ENCODE measurements at regions of chr12 and their contacts with region 1.

Region 1: DNA sequence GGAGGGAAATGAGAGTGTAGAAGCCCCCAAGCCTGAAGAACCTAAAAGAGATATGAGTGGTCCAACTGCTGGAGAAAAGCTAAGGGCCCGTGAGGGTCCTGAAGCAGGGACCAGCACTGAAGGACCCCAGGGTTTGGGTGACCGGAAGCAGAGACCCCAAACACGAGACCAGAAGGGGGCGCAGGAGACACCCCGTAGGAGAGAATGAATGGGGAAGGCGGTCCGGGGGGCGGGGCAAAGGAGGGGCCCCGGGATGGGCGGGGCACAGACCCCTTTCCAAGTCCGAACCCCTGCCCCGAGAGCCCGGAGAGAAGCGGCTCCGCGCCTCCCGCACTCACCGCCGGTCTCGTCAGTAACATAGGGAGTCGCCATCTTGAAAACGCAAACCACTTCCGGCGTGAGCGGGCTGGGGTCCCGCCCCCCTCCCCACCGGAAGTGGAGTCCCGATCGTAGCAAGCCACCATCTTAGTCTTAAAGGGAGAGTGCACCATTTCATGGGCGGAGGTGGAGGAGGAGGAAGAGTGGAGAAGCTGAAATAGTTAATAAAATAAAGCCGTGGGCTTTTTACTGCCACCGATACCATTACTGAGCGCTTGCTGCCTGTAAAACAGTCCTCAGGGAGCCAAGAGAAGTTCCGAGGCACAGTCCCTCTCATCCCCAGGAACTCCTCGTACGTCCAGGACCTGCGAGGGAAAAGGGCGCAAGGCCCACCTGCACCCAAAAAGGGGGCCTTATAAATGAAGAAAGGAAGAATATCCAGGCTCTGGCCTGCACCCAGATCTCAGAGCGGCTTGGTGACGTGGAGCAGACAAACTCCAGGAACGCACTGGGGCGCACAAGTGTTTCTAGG is 731 bp downstream of the PYM1 start:
- DNase-seq: peak; percentile 85
- H3K4me3 Mint-ChIP-seq: peak overlapping the region; percentile 90
- H3K27ac Mint-ChIP-seq: peak overlapping the region; percentile 96
- H3K4me1 Mint-ChIP-seq: peaks cover 52% of the 10 kb centered on the region
- H3K27me3 Mint-ChIP-seq: no peaks in the 10 kb centered on the region

Region 2: DNA sequence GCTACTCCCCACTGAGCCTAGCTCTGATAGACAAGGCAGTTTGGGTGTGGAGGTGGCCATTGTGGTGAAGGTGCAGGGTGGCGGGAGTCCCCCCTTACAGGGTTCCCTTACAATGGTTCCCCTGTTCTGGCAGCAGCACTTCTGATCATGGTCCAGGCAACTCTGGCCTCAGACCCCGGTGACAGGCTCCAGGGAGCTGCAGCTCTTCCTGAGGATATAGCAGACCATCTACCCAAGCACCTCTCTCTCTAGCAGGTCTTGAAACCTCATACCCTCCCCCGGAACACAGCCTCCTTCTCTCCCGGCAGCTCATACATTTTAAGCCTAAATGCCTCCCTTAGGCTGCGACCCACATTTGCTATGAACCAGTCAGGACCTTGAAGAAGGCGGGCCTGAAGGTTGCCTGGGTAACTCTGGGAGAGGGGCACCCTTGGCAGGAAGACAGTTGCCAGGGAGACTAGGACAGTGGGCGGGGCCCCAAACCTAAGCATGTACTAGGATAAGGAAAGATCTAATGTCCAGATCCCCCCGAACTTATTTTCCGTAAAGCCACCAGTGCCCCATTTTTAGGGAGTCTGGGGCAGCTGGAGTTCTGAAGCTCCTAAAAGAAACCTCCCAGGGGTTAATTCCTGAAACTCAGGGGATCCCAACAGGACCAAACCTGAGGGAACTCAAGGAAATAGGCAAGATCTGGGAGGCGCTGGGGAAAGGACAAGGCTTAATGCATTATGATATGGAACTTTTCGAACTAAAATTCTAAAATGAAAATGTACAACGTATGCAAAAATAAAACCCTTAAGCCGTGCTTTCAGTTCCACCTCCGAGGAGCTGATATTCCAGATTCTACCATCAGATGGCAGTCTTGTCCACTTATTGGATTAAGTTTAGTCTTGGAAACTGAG is 188.6 kb before region 1 on chr12:
- intact Hi-C with region 1: loop called (anchors 1 kb)
- DNase-seq: peak; percentile 73
- H3K4me3 Mint-ChIP-seq: peak overlapping the region; percentile 79
- H3K27ac Mint-ChIP-seq: peak overlapping the region; percentile 73
- H3K4me1 Mint-ChIP-seq: peaks cover 44% of the 10 kb centered on the region
- H3K27me3 Mint-ChIP-seq: peaks cover 3% of the 10 kb centered on the region

Region 3: GRCh38 chr12:55899082-55899481 is 27.9 kb before region 1 on chr12:
- intact Hi-C with region 1: loop called (anchors 1 kb)
- DNase-seq: no peak
- H3K4me3 Mint-ChIP-seq: no peak overlapping the region
- H3K27ac Mint-ChIP-seq: peak overlapping the region; percentile 65
- H3K4me1 Mint-ChIP-seq: peaks cover 8% of the 10 kb centered on the region
- H3K27me3 Mint-ChIP-seq: no peaks in the 10 kb centered on the region

Region 4: DNA sequence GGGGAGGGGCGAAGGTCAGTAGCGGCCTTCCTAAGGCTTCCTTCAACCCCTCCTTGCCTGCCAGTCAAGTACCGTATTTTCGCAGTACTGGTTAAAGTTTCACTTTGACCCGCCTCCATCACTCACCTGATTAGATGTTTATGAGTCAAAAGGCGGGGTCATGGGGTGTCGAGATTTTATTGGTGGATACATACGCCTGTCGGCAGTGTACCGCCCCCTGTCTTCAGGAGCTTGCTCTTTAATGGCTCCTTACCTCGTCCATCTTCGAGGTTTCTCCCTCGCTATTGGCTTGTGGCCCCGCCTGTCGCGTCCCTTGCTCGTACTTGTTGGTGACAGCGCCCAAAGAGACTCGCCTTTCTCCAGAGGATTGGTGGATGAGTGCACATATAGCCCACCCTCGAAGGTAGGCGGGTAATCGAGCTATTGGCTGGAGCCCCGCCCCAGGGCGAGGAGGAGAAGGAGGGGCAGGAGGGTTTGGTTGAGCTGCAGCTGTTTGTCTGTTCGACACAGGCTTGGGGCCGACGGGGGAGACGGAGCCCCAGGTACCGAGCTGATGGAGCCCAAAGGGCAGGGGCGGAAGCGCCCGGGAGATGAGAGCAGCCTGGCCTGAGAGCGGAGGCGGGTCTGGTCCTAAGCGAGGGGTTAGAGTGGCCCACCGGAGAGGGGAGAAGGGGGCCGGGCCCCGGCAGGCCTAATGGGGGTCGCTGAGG is 46.8 kb after region 1 on chr12 and contains the start of gene RAB5B:
- intact Hi-C with region 1: loop called (anchors 1 kb)
- DNase-seq: peak; percentile 98
- H3K4me3 Mint-ChIP-seq: no peak within 1 kb of the TSS
- H3K27ac Mint-ChIP-seq: no peak within 1 kb of the TSS
- H3K4me1 Mint-ChIP-seq: peaks cover 20% of the 10 kb centered on the region
- H3K27me3 Mint-ChIP-seq: no peaks in the 10 kb centered on the region
- total RNA-seq, gene RAB5B: 42.6 and 47.0 TPM in 2 replicates

Region 5: GRCh38 chr12:56359851-56360767 is 433.1 kb after region 1 on chr12 and contains the start of gene STAT2:
- intact Hi-C with region 1: no loop called
- DNase-seq: peak; percentile 100
- H3K4me3 Mint-ChIP-seq: peak within 1 kb of the TSS; percentile 97
- H3K27ac Mint-ChIP-seq: peak within 1 kb of the TSS; percentile 97
- H3K4me1 Mint-ChIP-seq: peaks cover 29% of the 10 kb centered on the region
- H3K27me3 Mint-ChIP-seq: no peaks in the 10 kb centered on the region
- total RNA-seq, gene STAT2: 70.2 and 71.3 TPM in 2 replicates

Region 6: DNA sequence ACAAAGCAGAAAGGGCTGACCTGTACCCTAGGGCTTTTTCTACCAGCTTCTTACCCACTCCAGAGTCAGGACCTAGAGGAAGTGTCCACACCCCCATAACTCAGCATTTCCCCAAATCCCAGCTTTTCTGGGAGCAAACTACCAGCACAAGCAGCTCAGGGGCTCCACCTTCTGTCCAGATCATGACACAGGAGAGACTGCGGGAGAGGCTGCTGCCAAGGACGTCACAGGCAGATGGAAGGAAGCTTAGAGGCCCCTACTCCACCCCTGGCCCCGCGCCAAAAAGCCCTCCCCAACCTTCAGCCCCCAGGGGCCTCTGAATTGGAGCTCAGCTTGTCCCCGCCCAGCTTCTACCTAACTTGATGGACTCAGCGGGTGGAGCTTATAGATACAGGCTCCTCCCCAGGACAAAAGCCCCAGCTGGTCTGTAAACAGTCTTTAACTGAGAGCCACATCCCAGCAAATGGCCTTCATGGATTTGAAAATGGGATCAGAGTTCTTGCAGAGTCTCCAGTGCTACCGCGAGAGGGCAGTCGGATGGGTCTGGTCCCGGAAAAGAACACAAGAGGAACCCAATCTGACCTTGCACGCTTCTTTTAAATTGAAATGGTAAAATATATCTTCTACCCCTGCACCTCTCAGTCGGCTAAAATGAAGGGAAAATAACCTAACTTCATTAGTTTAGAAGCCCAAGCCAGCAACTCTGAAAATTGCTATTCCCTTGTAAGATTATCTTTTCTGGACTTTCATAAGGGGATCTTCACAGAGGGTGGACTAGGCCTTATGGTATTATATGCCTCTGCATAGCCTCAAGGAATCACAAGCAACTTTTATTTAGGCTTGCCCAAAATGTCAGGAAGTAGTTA is 709.9 kb after region 1 on chr12:
- intact Hi-C with region 1: loop called (anchors 2 kb)
- DNase-seq: peak; percentile 79
- H3K4me3 Mint-ChIP-seq: peak overlapping the region; percentile 98
- H3K27ac Mint-ChIP-seq: peak overlapping the region; percentile 92
- H3K4me1 Mint-ChIP-seq: peaks cover 62% of the 10 kb centered on the region
- H3K27me3 Mint-ChIP-seq: no peaks in the 10 kb centered on the region

Region 7: DNA sequence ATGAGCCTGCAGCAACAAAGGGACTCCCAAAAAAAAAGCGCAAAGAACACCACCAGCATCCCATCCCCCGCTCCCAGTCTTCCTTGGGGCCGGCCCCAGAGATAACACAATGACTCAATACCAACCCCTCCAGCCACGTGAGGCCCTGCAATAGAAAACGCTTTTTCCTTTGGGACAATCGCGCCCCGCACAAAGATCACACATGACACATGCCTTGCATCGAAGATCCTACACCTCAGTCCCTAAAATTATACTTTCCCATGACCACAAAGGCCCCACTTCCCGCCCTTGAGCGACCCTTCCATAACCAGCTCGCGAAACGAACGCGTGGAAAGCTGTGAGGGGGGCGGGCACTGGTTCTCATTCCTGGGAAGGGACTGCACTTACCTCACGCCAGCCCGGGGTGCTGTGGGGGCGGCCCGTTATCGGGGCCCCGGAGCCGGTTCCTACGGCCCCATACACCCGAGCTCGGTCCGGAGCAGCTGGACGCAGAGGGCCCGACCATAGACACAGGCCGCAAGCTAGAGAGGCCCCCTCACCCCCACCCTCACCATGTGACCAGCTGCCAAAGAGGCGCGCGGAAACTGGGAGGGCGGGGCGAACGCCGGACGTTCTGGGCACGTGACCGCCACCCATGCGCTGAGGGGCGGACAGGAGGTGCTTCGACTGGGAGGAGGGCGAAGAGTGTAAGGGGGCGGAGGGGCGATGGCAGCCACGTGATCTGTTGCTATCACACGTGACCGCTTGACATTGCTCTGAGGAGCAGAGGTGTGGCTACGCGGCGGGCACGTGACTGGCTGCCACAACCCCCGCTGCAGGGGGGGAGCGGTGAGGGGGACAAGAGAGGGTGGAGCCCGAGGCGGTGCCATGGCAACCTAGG is 1825.1 kb after region 1 on chr12 and contains the start of gene CDK4:
- intact Hi-C with region 1: loop called (anchors 5 kb)
- DNase-seq: peak; percentile 98
- H3K4me3 Mint-ChIP-seq: peak within 1 kb of the TSS; percentile 94
- H3K27ac Mint-ChIP-seq: peak within 1 kb of the TSS; percentile 95
- H3K4me1 Mint-ChIP-seq: peaks cover 67% of the 10 kb centered on the region
- H3K27me3 Mint-ChIP-seq: peaks cover 3% of the 10 kb centered on the region
- total RNA-seq, gene CDK4: 218 and 227 TPM in 2 replicates